PC-9 (cell line): ENCODE measurements at regions of chr15 and their contacts with region 1.

Region 1: DNA sequence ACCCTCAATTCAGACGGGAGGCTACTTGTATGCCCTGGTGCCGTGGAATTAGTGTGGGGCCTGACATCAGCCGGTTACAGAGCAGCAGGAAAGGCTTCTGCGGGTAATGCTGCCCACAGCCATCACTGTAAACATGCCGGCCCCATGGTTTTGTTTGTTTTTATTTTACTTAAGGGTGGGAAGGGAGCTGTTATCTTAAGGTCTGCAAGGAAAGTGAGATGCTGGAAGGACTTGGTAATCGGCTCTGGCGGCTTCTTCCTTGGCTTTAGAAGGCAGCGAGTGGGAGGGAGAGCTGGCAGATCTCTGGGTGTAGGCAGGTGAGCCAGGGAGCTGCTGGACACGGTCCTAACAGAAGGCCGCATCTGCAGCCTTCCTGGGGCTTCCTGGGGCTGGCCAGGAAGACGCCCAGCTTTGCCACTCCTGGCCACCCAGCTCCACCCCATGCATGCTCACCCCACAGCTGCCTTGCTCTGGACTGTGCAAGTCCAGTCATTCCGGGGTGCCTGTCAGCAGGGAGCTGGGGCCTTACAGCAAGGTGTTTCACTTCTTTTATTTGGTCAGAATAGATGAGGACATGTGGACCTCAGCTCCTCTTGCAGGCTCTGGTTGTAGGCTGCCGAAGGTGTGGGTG is 54.1 kb upstream of the FURIN start:
- DNase-seq: no peak
- H3K4me3 ChIP-seq: no peak overlapping the region
- H3K27ac ChIP-seq: no peak overlapping the region
- H3K4me1 ChIP-seq: no peaks in the 10 kb centered on the region
- H3K27me3 ChIP-seq: no peaks in the 10 kb centered on the region
- CTCF ChIP-seq: no peak

Region 2: GRCh38 chr15:90642464-90643300 is 171.6 kb before region 1 on chr15:
- CTCF ChIA-PET with region 1: no interaction called
- POLR2A ChIA-PET with region 1: no interaction called
- intact Hi-C with region 1: no loop called
- DNase-seq: no peak
- H3K4me3 ChIP-seq: no peak overlapping the region
- H3K27ac ChIP-seq: no peak overlapping the region
- H3K4me1 ChIP-seq: peaks cover 2% of the 10 kb centered on the region
- H3K27me3 ChIP-seq: no peaks in the 10 kb centered on the region
- CTCF ChIP-seq: no peak

Region 3: DNA sequence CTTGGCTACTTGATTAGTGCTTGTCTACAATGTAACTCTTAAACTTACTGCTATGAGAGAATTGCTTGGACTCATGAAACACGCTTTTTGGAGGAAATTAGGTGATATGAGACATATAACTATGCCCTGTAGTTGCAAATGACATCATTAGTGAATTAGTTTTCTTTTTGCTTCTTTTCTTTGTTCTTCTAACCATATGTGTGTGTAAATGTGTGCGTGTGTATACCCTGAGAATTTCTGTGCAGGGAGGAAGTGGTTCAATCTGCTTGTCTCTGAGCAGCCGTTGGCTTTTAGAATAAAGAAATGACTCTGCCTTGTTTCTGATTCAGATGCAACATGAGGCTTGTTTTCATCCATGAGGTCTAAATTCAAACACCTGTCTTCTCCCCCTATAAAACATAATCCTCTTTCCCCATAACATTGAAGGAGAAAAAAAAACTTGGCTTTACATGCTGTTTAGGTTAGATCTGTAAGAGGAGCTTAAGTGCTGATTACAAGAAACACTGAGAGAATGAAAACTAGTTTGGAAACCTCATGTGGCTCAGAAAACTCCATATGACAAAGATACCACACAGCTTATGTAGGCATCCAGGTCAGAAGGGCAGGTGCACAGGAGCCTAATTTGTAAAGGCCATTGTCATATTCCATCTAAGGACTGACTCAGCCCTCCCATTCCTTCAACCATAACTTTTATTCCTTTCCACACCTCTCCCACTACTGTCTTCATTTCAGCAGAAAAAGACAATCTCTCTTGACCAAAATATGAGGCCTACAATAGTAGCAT is 127.7 kb before region 1 on chr15:
- CTCF ChIA-PET with region 1: no interaction called
- POLR2A ChIA-PET with region 1: interaction called, 10 read pairs
- intact Hi-C with region 1: no loop called
- DNase-seq: no peak
- H3K4me3 ChIP-seq: no peak overlapping the region
- H3K27ac ChIP-seq: no peak overlapping the region
- H3K4me1 ChIP-seq: no peaks in the 10 kb centered on the region
- H3K27me3 ChIP-seq: no peaks in the 10 kb centered on the region
- CTCF ChIP-seq: no peak

Region 4: DNA sequence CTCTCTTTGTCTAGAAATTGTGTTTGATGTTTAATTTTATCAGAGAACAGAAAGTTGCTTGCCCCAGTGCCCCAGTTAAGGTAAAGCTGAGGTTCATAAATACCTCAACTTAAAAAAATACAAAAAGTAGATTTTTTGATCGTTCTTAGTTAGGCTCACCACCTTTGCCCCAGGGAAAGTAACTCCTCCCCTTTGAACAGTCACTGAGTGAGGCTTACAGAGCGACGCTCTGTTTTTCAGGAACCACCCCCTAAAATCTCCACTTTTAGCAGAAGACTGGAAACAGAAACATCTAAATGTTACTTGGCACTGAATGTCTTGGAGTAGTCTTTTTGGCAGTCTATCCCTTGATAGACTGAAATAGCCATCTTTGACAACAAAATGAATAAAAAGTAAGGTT is 72.2 kb before region 1 on chr15:
- CTCF ChIA-PET with region 1: no interaction called
- POLR2A ChIA-PET with region 1: no interaction called
- intact Hi-C with region 1: no loop called
- DNase-seq: no peak
- H3K4me3 ChIP-seq: no peak overlapping the region
- H3K27ac ChIP-seq: no peak overlapping the region
- H3K4me1 ChIP-seq: no peaks in the 10 kb centered on the region
- H3K27me3 ChIP-seq: no peaks in the 10 kb centered on the region
- CTCF ChIP-seq: no peak